Dorsolateral prefrontal cortex (tissue), 120 donors: ENCODE measurements at regions of chr19 and their contacts with region 1.

Region 1: GRCh38 chr19:51158474-51159129 is 16.5 kb downstream of the SIGLEC7 start:
- DNase-seq: peak in 2 of 10 donors; percentile 40 to 47
- H3K4me3 ChIP-seq: no peak overlapping the region
- H3K27ac ChIP-seq: no peak overlapping the region
- H3K27me3 ChIP-seq: peaks cover 0 to 20% (median 0%) of the 10 kb centered on the region in 45 donors
- CTCF ChIP-seq: peak; percentile 33 to 73 (median 61)

Region 2: DNA sequence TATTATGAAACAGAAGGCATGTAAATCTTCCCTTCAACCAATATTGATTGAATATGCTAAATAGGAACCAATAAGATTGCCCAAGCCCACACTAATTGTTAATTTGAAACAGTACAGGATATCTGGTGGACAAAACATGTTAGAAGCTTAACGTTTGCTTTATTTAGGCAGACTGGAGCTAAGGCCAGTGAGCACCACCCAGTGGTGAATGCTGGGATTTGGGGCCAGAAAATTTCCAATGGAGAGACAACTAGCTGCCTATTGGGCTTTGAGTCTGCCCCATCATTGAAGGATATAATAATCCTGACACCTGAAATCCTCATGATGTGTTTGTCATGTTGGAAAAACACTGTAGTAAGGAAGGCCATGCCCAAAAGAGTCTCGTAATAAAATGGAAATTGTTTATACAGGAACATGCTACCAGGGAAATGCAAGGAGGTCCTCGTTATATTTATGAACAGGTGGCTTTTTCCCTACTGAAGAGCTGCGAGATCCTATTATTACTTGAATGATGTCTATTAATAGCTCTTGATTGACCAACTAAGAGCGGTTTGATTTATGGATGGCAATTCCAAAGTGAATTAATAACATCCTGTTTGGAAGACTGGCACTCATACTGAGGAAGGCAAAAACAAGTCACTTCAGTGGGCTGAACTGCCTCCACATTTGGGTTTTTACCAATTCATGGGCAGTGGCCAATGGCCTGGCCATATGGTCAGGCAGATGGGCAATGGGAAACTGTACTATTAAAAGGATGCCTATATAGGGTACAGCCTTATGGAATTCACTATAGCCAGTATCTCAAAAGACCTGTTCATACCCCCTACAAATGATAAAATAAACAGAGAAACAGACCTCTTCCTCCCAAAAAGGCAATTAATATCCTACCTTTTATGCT is 101.0 kb after region 1 on chr19:
- intact Hi-C with region 1: loop called in 1 of 2 experiments (anchors 10 kb)
- DNase-seq: peak in 7 of 10 donors; percentile 15 to 65 (median 51)
- H3K4me3 ChIP-seq: no peak overlapping the region
- H3K27ac ChIP-seq: peak overlapping the region in 1 of 59 donors; percentile 67
- H3K27me3 ChIP-seq: peaks cover 0 to 25% (median 0%) of the 10 kb centered on the region in 45 donors
- CTCF ChIP-seq: peak; percentile 25 to 72 (median 62)